Naive thymus-derived CD8-positive, alpha-beta T cell (primary cell): ENCODE measurements at regions of chr7 and their contacts with region 1.

Region 1: GRCh38 chr7:43594020-43594419 is 11.1 kb downstream of the STK17A start:
- DNase-seq: no peak
- ATAC-seq: peak in 1 of 2 donors; percentile 4
- H3K4me3 Mint-ChIP-seq: peak overlapping the region; percentile 66 to 92 (median 84)
- H3K27ac Mint-ChIP-seq: peak overlapping the region; percentile 83 to 96 (median 92)
- H3K4me1 Mint-ChIP-seq: peaks cover 35 to 89% (median 82%) of the 10 kb centered on the region in 4 donors
- H3K27me3 Mint-ChIP-seq: no peaks in the 10 kb centered on the region

Region 2: GRCh38 chr7:43625453-43625852 is 31.4 kb after region 1 on chr7:
- POLR2A ChIA-PET with region 1: interaction called, 11 read pairs
- DNase-seq: peak in 9 of 10 donors; percentile 35 to 78 (median 72)
- ATAC-seq: peak; percentile 48 to 83
- H3K4me3 Mint-ChIP-seq: peak overlapping the region; percentile 63 to 85 (median 72)
- H3K27ac Mint-ChIP-seq: peak overlapping the region in 8 of 10 donors; percentile 52 to 98 (median 94)
- H3K4me1 Mint-ChIP-seq: peaks cover 43 to 94% (median 86%) of the 10 kb centered on the region in 4 donors
- H3K27me3 Mint-ChIP-seq: peaks cover 0 to 2% (median 0%) of the 10 kb centered on the region in 5 donors

Region 3: DNA sequence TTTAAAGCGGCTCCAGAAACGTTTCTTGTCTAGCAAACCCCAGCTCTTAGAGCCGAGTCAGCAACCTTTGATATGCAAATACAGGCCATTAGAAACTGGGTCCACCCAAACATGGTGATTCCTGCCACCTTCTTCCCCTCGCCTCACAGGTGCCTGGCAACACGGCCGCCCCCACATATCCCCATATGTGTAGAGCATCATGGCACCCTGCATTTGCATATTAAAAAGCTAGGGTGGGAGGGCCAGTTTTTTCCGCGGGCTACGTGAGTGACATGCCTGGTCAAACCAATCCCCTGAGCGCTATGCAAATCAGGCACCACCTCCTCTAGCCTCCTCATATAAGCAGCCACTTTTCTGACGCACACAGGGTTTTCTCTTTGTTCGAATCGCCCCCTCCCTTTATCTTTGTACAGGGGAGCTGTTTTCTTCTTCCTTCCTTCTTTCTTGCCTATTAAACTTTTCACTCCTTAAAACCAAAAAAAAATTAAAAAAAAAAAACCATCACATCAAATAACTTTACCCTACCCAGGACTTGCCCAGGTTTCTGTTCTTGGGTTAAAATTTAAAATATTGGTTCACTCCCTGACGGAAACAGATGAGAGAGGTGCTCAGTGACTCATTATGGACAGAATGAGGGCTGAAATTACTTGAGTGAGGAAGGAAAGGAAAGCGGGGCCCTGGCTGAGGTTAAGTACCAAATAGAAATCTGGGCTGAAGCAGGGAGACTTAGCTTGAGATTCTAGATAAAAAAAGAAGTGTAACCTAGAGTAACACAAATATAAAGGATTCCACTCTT is 75.5 kb after region 1 on chr7:
- POLR2A ChIA-PET with region 1: no interaction called
- DNase-seq: peak in 8 of 10 donors; percentile 43 to 77 (median 55)
- ATAC-seq: peak; percentile 78 to 83
- H3K4me3 Mint-ChIP-seq: peak overlapping the region; percentile 47 to 81 (median 68)
- H3K27ac Mint-ChIP-seq: peak overlapping the region; percentile 63 to 90 (median 88)
- H3K4me1 Mint-ChIP-seq: peaks cover 26 to 84% (median 76%) of the 10 kb centered on the region in 4 donors
- H3K27me3 Mint-ChIP-seq: no peaks in the 10 kb centered on the region